B cell (primary cell): ENCODE measurements at regions of chr9 and their contacts with region 1.

Region 1: GRCh38 chr9:89522261-89522958 is 24.5 kb upstream of the SEMA4D start:
- DNase-seq: peak; percentile 88
- ATAC-seq: peak; percentile 94
- H3K4me3 ChIP-seq: peak overlapping the region in 3 of 5 experiments; percentile 5 to 39 (median 29)
- H3K4me3 Mint-ChIP-seq: peak overlapping the region; percentile 75
- H3K27ac ChIP-seq: peak overlapping the region; percentile 79 to 81
- H3K27ac Mint-ChIP-seq: peak overlapping the region; percentile 94
- H3K4me1 ChIP-seq: peaks cover 65 to 89% of the 10 kb centered on the region in 2 donors
- H3K4me1 Mint-ChIP-seq: peaks cover 81% of the 10 kb centered on the region
- H3K27me3 ChIP-seq: no peaks in the 10 kb centered on the region
- H3K27me3 Mint-ChIP-seq: no peaks in the 10 kb centered on the region
- CTCF ChIP-seq: no peak

Region 2: GRCh38 chr9:89428901-89429890 is 93.2 kb before region 1 on chr9:
- CTCF ChIA-PET with region 1: interaction called, 9 read pairs
- POLR2A ChIA-PET with region 1: no interaction called
- intact Hi-C with region 1: loop called (anchors 1 kb)
- DNase-seq: peak; percentile 70
- ATAC-seq: peak; percentile 29
- H3K4me3 ChIP-seq: no peak overlapping the region
- H3K4me3 Mint-ChIP-seq: no peak overlapping the region
- H3K27ac ChIP-seq: no peak overlapping the region
- H3K27ac Mint-ChIP-seq: peak overlapping the region; percentile 59
- H3K4me1 ChIP-seq: peaks cover 78 to 98% of the 10 kb centered on the region in 2 donors
- H3K4me1 Mint-ChIP-seq: peaks cover 86% of the 10 kb centered on the region
- H3K27me3 ChIP-seq: no peaks in the 10 kb centered on the region
- H3K27me3 Mint-ChIP-seq: no peaks in the 10 kb centered on the region
- CTCF ChIP-seq: peak; percentile 68

Region 3: GRCh38 chr9:89464300-89464901 is 58.0 kb before region 1 on chr9:
- CTCF ChIA-PET with region 1: no interaction called
- POLR2A ChIA-PET with region 1: no interaction called
- intact Hi-C with region 1: loop called (anchors 1 kb)
- DNase-seq: peak; percentile 32
- ATAC-seq: peak; percentile 37
- H3K4me3 ChIP-seq: peak overlapping the region; percentile 8 to 58 (median 20)
- H3K4me3 Mint-ChIP-seq: peak overlapping the region; percentile 76
- H3K27ac ChIP-seq: peak overlapping the region; percentile 67 to 78
- H3K27ac Mint-ChIP-seq: peak overlapping the region; percentile 78
- H3K4me1 ChIP-seq: peaks cover 72 to 75% of the 10 kb centered on the region in 2 donors
- H3K4me1 Mint-ChIP-seq: peaks cover 90% of the 10 kb centered on the region
- H3K27me3 ChIP-seq: no peaks in the 10 kb centered on the region
- H3K27me3 Mint-ChIP-seq: no peaks in the 10 kb centered on the region
- CTCF ChIP-seq: no peak

Region 4: DNA sequence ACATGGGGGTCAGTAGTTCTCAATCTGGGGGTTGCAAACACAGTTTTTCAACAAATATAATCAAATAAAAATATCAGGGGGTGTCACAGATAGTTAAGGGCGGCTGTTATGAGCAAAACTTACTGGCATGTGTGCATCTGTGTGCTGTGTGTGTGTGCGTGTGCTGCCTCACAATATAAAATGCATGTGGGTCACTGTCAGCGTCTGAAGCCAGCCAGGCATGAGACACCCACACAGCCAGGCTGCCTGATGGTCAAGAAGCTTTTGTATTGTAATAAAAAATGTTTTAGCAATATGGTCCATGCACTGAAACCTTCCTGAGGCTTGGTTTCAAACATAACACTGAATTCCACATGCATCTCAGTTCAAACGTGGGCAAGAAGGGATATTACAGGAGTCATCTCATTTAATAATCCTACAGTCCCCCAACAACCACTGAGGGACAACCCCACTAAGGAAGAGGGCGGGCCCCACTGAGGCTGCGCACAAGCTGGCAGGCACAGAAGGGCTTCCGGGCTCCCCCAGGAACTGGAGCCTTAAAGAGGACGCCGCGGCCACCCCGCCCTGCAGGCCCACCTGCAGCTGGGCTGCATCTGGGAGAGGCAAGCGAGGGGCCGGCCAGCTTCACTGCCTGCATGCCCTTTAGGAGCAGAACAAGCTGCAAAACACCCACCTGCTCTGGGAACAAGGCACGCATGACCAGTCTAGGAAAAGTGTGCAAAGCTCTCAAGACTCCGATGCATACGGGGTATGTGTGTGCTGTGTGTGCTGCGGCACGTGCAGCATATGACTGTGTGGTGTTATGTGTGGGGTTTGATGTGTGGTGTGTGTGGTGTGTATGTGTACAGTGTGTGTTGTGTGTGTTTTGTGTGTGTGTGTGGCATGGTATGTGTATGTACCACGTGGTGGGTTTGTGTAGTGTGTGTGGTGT is 38.6 kb before region 1 on chr9:
- CTCF ChIA-PET with region 1: interaction called, 3 read pairs
- POLR2A ChIA-PET with region 1: no interaction called
- intact Hi-C with region 1: loop called (anchors 1 kb)
- DNase-seq: peak; percentile 73
- ATAC-seq: peak; percentile 76
- H3K4me3 ChIP-seq: peak overlapping the region; percentile 39 to 86 (median 58)
- H3K4me3 Mint-ChIP-seq: peak overlapping the region; percentile 91
- H3K27ac ChIP-seq: peak overlapping the region; percentile 48 to 84
- H3K27ac Mint-ChIP-seq: peak overlapping the region; percentile 93
- H3K4me1 ChIP-seq: peaks cover 47 to 50% of the 10 kb centered on the region in 2 donors
- H3K4me1 Mint-ChIP-seq: peaks cover 81% of the 10 kb centered on the region
- H3K27me3 ChIP-seq: no peaks in the 10 kb centered on the region
- H3K27me3 Mint-ChIP-seq: no peaks in the 10 kb centered on the region
- CTCF ChIP-seq: no peak

Region 5: GRCh38 chr9:89505911-89506310 is 16.5 kb before region 1 on chr9:
- CTCF ChIA-PET with region 1: interaction called, 7 read pairs
- POLR2A ChIA-PET with region 1: interaction called, 6 read pairs
- intact Hi-C with region 1: loop called (anchors 1 kb)
- DNase-seq: no peak
- ATAC-seq: no peak
- H3K4me3 ChIP-seq: no peak overlapping the region
- H3K4me3 Mint-ChIP-seq: no peak overlapping the region
- H3K27ac ChIP-seq: peak overlapping the region; percentile 26 to 79
- H3K27ac Mint-ChIP-seq: peak overlapping the region; percentile 69
- H3K4me1 ChIP-seq: peaks cover 62 to 65% of the 10 kb centered on the region in 2 donors
- H3K4me1 Mint-ChIP-seq: peaks cover 79% of the 10 kb centered on the region
- H3K27me3 ChIP-seq: no peaks in the 10 kb centered on the region
- H3K27me3 Mint-ChIP-seq: no peaks in the 10 kb centered on the region
- CTCF ChIP-seq: no peak

Region 6: GRCh38 chr9:89536145-89536574 is 13.8 kb after region 1 on chr9:
- CTCF ChIA-PET with region 1: interaction called, 4 read pairs
- POLR2A ChIA-PET with region 1: no interaction called
- intact Hi-C with region 1: loop called (anchors 2 kb)
- DNase-seq: no peak
- ATAC-seq: peak; percentile 17
- H3K4me3 ChIP-seq: peak overlapping the region in 1 of 5 experiments; percentile 12
- H3K4me3 Mint-ChIP-seq: peak overlapping the region; percentile 70
- H3K27ac ChIP-seq: no peak overlapping the region
- H3K27ac Mint-ChIP-seq: peak overlapping the region; percentile 68
- H3K4me1 ChIP-seq: peaks cover 23 to 30% of the 10 kb centered on the region in 2 donors
- H3K4me1 Mint-ChIP-seq: peaks cover 27% of the 10 kb centered on the region
- H3K27me3 ChIP-seq: no peaks in the 10 kb centered on the region
- H3K27me3 Mint-ChIP-seq: no peaks in the 10 kb centered on the region
- CTCF ChIP-seq: no peak